ENCODE measurements at regions of chr5 and their contacts with region 1.

Region 1: GRCh38 chr5:96934708-96935558 is 947 bp upstream of the LNPEP start:
- DNase-seq: peak; percentile 99
- H3K4me3 Mint-ChIP-seq: peak overlapping the region; percentile 81
- H3K27ac Mint-ChIP-seq: peak overlapping the region; percentile 94
- H3K4me1 Mint-ChIP-seq: peaks cover 54% of the 10 kb centered on the region
- H3K27me3 Mint-ChIP-seq: no peaks in the 10 kb centered on the region

Region 2: GRCh38 chr5:95822542-95823181 is 1112.3 kb before region 1 on chr5 and contains the start of gene GLRX:
- intact Hi-C with region 1: loop called (anchors 10 kb)
- DNase-seq: peak; percentile 91
- H3K4me3 Mint-ChIP-seq: peak within 1 kb of the TSS; percentile 91
- H3K27ac Mint-ChIP-seq: peak within 1 kb of the TSS; percentile 86
- H3K4me1 Mint-ChIP-seq: peaks cover 64% of the 10 kb centered on the region
- H3K27me3 Mint-ChIP-seq: no peaks in the 10 kb centered on the region
- total RNA-seq, gene GLRX: 13.5 and 17.3 TPM in 2 replicates

Region 3: DNA sequence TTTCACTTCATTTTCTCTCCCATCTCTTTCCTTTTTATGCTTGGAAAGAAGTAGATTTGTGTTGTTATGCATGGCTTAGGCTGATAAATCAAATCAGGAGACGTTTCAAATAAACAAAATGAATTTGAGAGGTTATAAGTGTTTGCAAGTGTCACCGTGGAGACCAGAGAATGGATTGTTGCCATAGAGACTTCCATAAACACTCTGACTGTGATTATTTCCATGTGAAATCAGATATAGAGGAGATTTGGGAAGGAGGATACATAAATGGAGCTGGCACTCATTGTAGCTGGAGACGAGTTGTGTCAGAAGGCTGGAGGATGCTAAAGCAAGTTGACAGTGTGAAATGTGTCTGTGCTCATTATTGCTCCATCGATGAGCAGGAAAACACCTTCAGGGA is 417.6 kb before region 1 on chr5:
- intact Hi-C with region 1: no loop called
- DNase-seq: no peak
- H3K4me3 Mint-ChIP-seq: no peak overlapping the region
- H3K27ac Mint-ChIP-seq: no peak overlapping the region
- H3K4me1 Mint-ChIP-seq: no peaks in the 10 kb centered on the region
- H3K27me3 Mint-ChIP-seq: peaks cover 11% of the 10 kb centered on the region

Region 4: GRCh38 chr5:96763026-96763425 is 171.9 kb before region 1 on chr5:
- intact Hi-C with region 1: no loop called
- DNase-seq: no peak
- H3K4me3 Mint-ChIP-seq: no peak overlapping the region
- H3K27ac Mint-ChIP-seq: no peak overlapping the region
- H3K4me1 Mint-ChIP-seq: no peaks in the 10 kb centered on the region
- H3K27me3 Mint-ChIP-seq: no peaks in the 10 kb centered on the region

Region 5: DNA sequence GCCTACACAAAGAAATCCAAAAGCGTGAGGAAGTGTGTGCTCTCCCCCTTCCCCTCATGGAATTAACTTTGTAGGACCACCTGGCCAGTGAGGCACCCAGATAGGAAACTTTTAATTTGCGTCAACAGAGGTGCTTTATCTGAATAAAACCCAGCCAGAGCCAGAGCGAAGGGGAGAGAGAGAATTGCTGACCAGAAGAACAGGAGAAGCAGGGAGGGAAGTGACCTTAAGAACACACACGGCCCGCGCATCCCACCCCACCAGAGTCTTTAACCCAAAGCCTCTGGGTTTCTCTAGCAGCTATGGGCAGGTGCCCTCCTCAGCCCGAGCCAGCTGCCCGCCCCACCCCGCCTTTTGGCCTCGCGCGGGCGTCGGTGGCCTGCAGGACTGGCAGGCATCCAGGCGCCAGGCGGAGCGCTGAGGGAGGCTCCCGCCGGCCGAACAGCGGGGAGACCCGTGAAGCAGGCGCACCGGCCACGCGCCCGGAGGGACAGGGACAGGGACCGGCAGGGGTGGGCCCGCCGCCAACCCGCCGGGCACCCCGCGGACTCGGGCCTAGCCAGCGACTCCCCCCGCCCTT is 127.8 kb before region 1 on chr5:
- intact Hi-C with region 1: loop called (anchors 1 kb)
- DNase-seq: peak; percentile 86
- H3K4me3 Mint-ChIP-seq: peak overlapping the region; percentile 90
- H3K27ac Mint-ChIP-seq: peak overlapping the region; percentile 94
- H3K4me1 Mint-ChIP-seq: peaks cover 60% of the 10 kb centered on the region
- H3K27me3 Mint-ChIP-seq: no peaks in the 10 kb centered on the region

Region 6: GRCh38 chr5:96896806-96897205 is 38.1 kb before region 1 on chr5:
- intact Hi-C with region 1: loop called (anchors 1 kb)
- DNase-seq: peak; percentile 60
- H3K4me3 Mint-ChIP-seq: peak overlapping the region; percentile 84
- H3K27ac Mint-ChIP-seq: peak overlapping the region; percentile 94
- H3K4me1 Mint-ChIP-seq: peaks cover 51% of the 10 kb centered on the region
- H3K27me3 Mint-ChIP-seq: no peaks in the 10 kb centered on the region

Region 7: GRCh38 chr5:96963267-96963666 is 28.3 kb after region 1 on chr5:
- intact Hi-C with region 1: loop called (anchors 1 kb)
- DNase-seq: peak; percentile 68
- H3K4me3 Mint-ChIP-seq: peak overlapping the region; percentile 79
- H3K27ac Mint-ChIP-seq: peak overlapping the region; percentile 92
- H3K4me1 Mint-ChIP-seq: peaks cover 58% of the 10 kb centered on the region
- H3K27me3 Mint-ChIP-seq: no peaks in the 10 kb centered on the region

Region 8: DNA sequence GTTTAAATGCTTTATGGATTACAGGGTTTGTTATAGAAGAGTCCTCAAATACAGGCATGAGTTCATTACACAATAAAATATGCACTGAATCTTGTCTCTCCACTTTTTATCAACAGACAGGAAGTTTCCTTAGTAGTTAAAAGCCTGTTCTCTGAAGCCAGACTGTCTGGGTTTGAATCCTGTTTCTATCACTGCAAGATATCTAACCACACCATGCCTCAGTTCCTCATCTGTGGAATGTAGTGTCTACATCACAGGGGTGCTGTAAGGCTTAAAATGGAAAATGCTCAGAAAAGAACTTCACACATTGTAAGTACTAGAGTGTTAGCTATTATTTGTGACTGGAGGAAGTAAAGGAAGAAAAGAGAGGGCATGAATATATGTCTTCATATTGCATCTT is 198.2 kb after region 1 on chr5:
- intact Hi-C with region 1: no loop called
- DNase-seq: no peak
- H3K4me3 Mint-ChIP-seq: no peak overlapping the region
- H3K27ac Mint-ChIP-seq: no peak overlapping the region
- H3K4me1 Mint-ChIP-seq: peaks cover 10% of the 10 kb centered on the region
- H3K27me3 Mint-ChIP-seq: peaks cover 19% of the 10 kb centered on the region

Region 9: GRCh38 chr5:97162045-97162444 is 227.1 kb after region 1 on chr5:
- intact Hi-C with region 1: loop called (anchors 2 kb)
- DNase-seq: peak; percentile 87
- H3K4me3 Mint-ChIP-seq: no peak overlapping the region
- H3K27ac Mint-ChIP-seq: no peak overlapping the region
- H3K4me1 Mint-ChIP-seq: peaks cover 5% of the 10 kb centered on the region
- H3K27me3 Mint-ChIP-seq: no peaks in the 10 kb centered on the region

Measured in activated CD4-positive, alpha-beta T cell treated with anti-CD3 and anti-CD28 coated beads, Interleukin-2, amount 10 ng/mL, durations not matched to agents 24 days and 14 days (primary cell).